Colonic mucosa (tissue), 4 donors: ENCODE measurements at regions of chr4 and their contacts with region 1.

Region 1: GRCh38 chr4:75708218-75708691 is 16.1 kb upstream of the USO1 start:
- DNase-seq: peak; percentile 55
- H3K4me3 ChIP-seq: no peak overlapping the region
- H3K27ac ChIP-seq: no peak overlapping the region
- H3K4me1 ChIP-seq: peaks cover 4% of the 10 kb centered on the region
- H3K27me3 ChIP-seq: no peaks in the 10 kb centered on the region
- CTCF ChIP-seq: peak; percentile 54

Region 2: DNA sequence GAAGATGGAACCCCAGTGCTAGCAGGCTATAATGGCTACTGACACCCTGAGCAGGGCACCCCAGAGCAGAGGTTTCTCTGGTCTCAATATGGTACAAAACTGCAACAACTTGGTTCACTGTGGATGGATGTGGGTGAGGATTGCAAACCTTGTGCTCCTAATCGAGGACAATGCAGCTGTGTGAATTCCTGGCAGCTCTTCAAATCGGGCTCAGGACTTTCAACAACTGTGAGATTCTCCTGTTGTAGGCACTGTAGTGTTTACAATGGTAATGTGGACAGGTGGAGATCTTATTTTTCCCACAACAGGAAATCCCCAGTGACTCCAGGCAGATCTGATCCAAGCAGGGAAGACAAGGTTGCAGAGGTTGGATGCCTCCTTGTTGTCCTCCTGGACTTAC is 295.5 kb before region 1 on chr4:
- intact Hi-C with region 1: no loop called
- DNase-seq: no peak
- H3K4me3 ChIP-seq: no peak overlapping the region
- H3K27ac ChIP-seq: no peak overlapping the region
- H3K4me1 ChIP-seq: no peaks in the 10 kb centered on the region
- H3K27me3 ChIP-seq: no peaks in the 10 kb centered on the region
- CTCF ChIP-seq: no peak

Region 3: GRCh38 chr4:75584067-75584466 is 124.2 kb before region 1 on chr4:
- intact Hi-C with region 1: no loop called
- DNase-seq: no peak
- H3K4me3 ChIP-seq: no peak overlapping the region
- H3K27ac ChIP-seq: no peak overlapping the region
- H3K4me1 ChIP-seq: no peaks in the 10 kb centered on the region
- H3K27me3 ChIP-seq: no peaks in the 10 kb centered on the region
- CTCF ChIP-seq: no peak

Region 4: DNA sequence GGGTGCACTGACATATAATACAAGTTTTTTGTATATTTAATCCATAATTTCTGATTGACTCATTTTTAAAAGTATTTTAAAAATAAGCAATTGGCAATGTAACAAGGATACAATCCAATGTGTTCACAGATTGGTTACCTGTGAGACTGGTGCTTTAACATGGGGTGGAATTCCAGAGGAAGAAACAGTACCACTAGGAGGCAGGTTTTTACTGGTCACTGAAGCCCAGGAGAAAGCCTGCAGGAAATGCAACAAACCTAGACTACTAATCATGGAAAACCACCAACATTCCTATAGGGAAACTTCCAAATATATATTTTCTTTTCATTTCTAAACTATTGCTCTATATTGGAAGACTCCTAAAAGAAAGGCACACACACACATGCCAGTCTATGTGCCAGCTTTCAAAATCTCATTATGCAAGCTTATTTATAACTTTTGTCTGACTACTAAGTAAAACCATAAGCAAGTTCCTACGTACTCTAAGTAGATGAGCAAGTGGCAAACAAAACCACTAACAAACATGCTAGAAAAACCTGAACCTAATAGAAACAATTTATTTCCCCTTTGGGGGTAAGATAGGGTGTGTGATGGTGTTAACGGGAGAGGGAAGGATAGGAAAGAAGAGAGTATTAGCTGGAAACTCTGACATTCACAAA is 54.3 kb before region 1 on chr4:
- intact Hi-C with region 1: loop called (anchors 5 kb)
- DNase-seq: no peak
- H3K4me3 ChIP-seq: no peak overlapping the region
- H3K27ac ChIP-seq: no peak overlapping the region
- H3K4me1 ChIP-seq: no peaks in the 10 kb centered on the region
- H3K27me3 ChIP-seq: no peaks in the 10 kb centered on the region
- CTCF ChIP-seq: peak; percentile 26

Region 5: GRCh38 chr4:75673027-75673958 is 35.0 kb before region 1 on chr4 and contains the start of gene G3BP2:
- intact Hi-C with region 1: loop called (anchors 5 kb)
- DNase-seq: peak; percentile 99
- H3K4me3 ChIP-seq: peak within 1 kb of the TSS; percentile 96
- H3K27ac ChIP-seq: peak within 1 kb of the TSS; percentile 99
- H3K4me1 ChIP-seq: peaks cover 10% of the 10 kb centered on the region
- H3K27me3 ChIP-seq: no peaks in the 10 kb centered on the region
- CTCF ChIP-seq: no peak
- total RNA-seq, gene G3BP2: 165 to 183 TPM